ENCODE measurements at regions of chr2 and their contacts with region 1.

Region 1: DNA sequence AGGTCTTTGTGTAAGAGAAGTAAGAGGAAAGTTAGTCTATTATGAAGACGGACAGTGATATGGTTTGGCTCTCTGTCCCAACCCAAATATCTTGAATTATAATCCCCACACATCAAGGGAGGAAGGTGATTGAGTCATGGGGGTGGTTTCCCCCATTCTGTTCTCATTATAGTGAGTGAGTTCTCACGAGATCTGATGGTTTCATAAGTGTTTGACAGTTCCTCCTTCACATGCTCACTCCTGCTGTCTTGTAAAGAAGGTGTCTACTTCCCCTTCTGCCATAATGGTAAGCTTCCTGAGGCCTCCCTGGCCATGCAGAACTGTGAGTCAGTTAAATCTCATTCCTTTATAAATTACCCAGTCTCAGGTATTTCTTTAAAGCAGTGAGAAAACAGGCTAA is 67.6 kb downstream of the NEURL3 start:
- DNase-seq: no peak
- ATAC-seq: no peak
- H3K4me3 ChIP-seq: no peak overlapping the region
- H3K4me3 Mint-ChIP-seq: no peak overlapping the region
- H3K27ac ChIP-seq: no peak overlapping the region
- H3K27ac Mint-ChIP-seq: no peak overlapping the region
- H3K4me1 ChIP-seq: no peaks in the 10 kb centered on the region
- H3K4me1 Mint-ChIP-seq: no peaks in the 10 kb centered on the region
- H3K27me3 ChIP-seq: peaks cover 0 to 7% of the 10 kb centered on the region in 2 experiments
- H3K27me3 Mint-ChIP-seq: peaks cover 0 to 7% of the 10 kb centered on the region in 2 donors

Region 2: DNA sequence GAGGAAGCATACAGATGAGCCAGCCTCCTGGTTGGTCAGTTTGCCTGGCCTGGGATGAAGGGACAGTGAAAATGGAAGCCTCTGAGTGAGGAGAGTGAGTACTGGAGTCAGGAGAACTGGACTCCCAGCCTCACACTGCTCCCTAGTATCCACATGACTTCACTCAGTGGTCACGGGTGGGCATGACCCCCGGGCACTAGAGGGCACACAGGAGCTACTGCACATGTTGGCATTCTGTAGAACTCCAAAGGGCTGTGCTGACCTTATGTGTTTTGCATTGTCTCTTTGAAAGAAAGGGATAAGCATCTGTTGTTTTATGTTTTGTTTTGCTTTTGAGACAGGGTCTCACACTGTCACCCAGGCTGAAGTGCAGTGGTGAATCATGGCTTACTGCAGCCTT is 78.2 kb before region 1 on chr2:
- CTCF ChIA-PET with region 1: no interaction called
- POLR2A ChIA-PET with region 1: no interaction called
- DNase-seq: peak in 33 of 35 experiments; percentile 20 to 65 (median 46)
- ATAC-seq: peak; percentile 67 to 89 (median 73)
- H3K4me3 ChIP-seq: no peak overlapping the region
- H3K4me3 Mint-ChIP-seq: no peak overlapping the region
- H3K27ac ChIP-seq: no peak overlapping the region
- H3K27ac Mint-ChIP-seq: peak overlapping the region; percentile 1 to 90
- H3K4me1 ChIP-seq: peaks cover 0 to 10% of the 10 kb centered on the region in 2 experiments
- H3K4me1 Mint-ChIP-seq: peaks cover 0 to 19% (median 10%) of the 10 kb centered on the region in 3 donors
- H3K27me3 ChIP-seq: no peaks in the 10 kb centered on the region
- H3K27me3 Mint-ChIP-seq: no peaks in the 10 kb centered on the region

Region 3: GRCh38 chr2:97745474-97746174 is 1308.1 kb after region 1 on chr2:
- CTCF ChIA-PET with region 1: no interaction called
- POLR2A ChIA-PET with region 1: interaction called in 1 of 2 experiments, 21 read pairs
- DNase-seq: peak in 31 of 35 experiments; percentile 19 to 71 (median 37)
- ATAC-seq: peak; percentile 46 to 71 (median 66)
- H3K4me3 ChIP-seq: no peak overlapping the region
- H3K4me3 Mint-ChIP-seq: peak overlapping the region; percentile 7 to 44 (median 8)
- H3K27ac ChIP-seq: peak overlapping the region; percentile 50
- H3K27ac Mint-ChIP-seq: peak overlapping the region; percentile 67 to 84
- H3K4me1 ChIP-seq: peaks cover 11 to 69% of the 10 kb centered on the region in 2 experiments
- H3K4me1 Mint-ChIP-seq: peaks cover 73 to 79% (median 74%) of the 10 kb centered on the region in 3 donors
- H3K27me3 ChIP-seq: no peaks in the 10 kb centered on the region
- H3K27me3 Mint-ChIP-seq: no peaks in the 10 kb centered on the region

Region 4: GRCh38 chr2:98404556-98405220 is 1967.2 kb after region 1 on chr2:
- CTCF ChIA-PET with region 1: no interaction called
- POLR2A ChIA-PET with region 1: no interaction called
- DNase-seq: no peak
- ATAC-seq: no peak
- H3K4me3 ChIP-seq: no peak overlapping the region
- H3K4me3 Mint-ChIP-seq: no peak overlapping the region
- H3K27ac ChIP-seq: no peak overlapping the region
- H3K27ac Mint-ChIP-seq: no peak overlapping the region
- H3K4me1 ChIP-seq: no peaks in the 10 kb centered on the region
- H3K4me1 Mint-ChIP-seq: no peaks in the 10 kb centered on the region
- H3K27me3 ChIP-seq: peaks cover 2 to 10% of the 10 kb centered on the region in 2 experiments
- H3K27me3 Mint-ChIP-seq: peaks cover 0 to 13% of the 10 kb centered on the region in 2 donors

Measured in T-cell (primary cell).